ENCODE measurements at regions of chr19 and their contacts with region 1.

Region 1: DNA sequence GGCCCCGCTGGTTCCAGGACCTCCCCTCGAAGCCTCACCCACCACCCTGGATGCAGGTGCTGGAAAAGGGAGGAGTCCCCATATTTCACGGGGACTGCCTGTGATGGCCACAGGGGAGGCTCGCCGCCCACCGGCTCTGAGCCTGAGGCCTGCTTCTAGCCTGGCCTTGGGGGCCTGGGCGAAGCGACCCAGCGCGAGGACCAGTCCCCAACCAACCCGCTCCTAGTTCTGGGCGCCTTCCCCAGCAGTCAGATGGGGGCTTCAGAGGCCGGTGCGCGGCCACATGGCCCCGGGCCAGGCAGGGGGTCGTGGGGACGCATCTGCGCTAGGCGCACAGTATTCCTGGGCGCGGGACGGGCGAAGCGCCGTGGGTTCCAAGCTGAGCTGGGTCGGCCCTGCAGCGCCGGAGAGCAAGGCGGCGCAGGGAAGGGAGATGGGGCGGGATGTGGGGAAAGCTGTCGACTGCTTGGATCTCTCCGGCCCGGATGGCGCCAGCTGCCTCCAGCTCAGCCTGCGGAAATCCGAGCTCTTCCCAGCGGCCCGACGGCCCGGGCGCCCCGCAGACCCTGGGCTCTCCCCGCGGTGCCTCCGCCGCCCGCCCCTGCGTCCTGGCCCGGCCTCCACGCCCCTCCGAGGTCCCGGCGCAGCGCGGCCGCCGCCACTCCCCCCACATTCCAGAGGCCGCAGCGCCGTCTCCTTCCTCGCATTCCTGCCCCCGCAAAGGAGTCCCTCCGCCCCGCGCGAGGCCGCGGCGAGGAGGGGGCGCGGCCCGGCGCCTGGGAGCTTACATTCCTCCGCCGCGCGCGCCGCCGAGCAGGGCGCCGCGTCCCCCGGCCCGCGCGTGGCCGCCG is at the start of gene WTIP:
- DNase-seq: peak in 1 of 2 donors; percentile 88
- H3K4me3 ChIP-seq: peak within 1 kb of the TSS; percentile 88 to 98
- H3K27ac ChIP-seq: peak within 1 kb of the TSS; percentile 86 to 95
- H3K4me1 ChIP-seq: peaks cover 6 to 21% of the 10 kb centered on the region in 2 donors
- H3K27me3 ChIP-seq: no peaks in the 10 kb centered on the region
- CTCF ChIP-seq: no peak
- total RNA-seq, gene WTIP: 127 TPM

Region 2: GRCh38 chr19:34253699-34254551 is 227.3 kb before region 1 on chr19:
- intact Hi-C with region 1: loop called (anchors 10 kb)
- DNase-seq: peak; percentile 34 to 90
- H3K4me3 ChIP-seq: peak overlapping the region; percentile 81 to 83
- H3K27ac ChIP-seq: peak overlapping the region; percentile 95 to 98
- H3K4me1 ChIP-seq: peaks cover 0 to 18% of the 10 kb centered on the region in 2 donors
- H3K27me3 ChIP-seq: no peaks in the 10 kb centered on the region
- CTCF ChIP-seq: no peak

Region 3: GRCh38 chr19:34409189-34410164 is 71.7 kb before region 1 on chr19:
- intact Hi-C with region 1: no loop called
- DNase-seq: no peak
- H3K4me3 ChIP-seq: no peak overlapping the region
- H3K27ac ChIP-seq: no peak overlapping the region
- H3K4me1 ChIP-seq: peaks cover 0 to 7% of the 10 kb centered on the region in 2 donors
- H3K27me3 ChIP-seq: no peaks in the 10 kb centered on the region
- CTCF ChIP-seq: no peak

Region 4: DNA sequence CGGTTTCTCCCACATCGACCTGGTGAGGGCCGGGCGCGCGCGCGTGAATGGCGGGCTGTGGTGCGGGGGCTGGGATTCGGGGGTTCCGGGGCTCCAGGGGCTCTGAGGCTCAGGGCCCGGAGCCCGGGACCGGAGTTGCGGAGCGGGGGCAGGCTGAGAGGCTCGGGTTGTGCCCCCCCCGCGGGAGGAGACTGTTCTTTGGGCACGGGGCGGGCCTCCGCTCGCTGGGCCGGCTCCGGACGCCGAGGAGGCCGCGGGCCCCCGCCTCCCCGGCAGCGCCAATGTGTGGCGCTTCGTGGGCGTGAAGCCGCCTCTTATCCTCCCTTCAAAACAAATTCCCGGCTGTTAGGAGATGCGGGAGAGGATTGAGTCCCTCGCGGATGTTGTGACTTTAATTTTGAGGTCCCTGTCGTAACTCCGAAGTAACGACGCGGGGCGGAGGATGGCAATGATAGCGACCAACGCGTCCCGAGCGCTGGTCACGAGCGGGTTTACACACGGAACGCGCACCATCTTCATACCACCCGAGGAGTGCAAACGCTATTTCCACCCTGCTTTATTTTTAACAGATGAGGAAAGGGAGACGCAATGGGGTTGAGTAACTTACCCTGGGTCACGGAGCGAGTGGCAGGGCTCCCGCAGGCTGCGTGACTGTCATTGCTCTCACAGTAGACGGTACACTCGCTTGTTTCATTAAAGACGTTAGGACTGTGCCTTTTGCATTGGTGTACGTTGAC is 52.5 kb before region 1 on chr19:
- intact Hi-C with region 1: loop called (anchors 1 kb)
- DNase-seq: peak in 1 of 2 donors; percentile 71
- H3K4me3 ChIP-seq: peak overlapping the region; percentile 75 to 88
- H3K27ac ChIP-seq: peak overlapping the region; percentile 93 to 99
- H3K4me1 ChIP-seq: peaks cover 8 to 40% of the 10 kb centered on the region in 2 donors
- H3K27me3 ChIP-seq: no peaks in the 10 kb centered on the region
- CTCF ChIP-seq: no peak

Region 5: DNA sequence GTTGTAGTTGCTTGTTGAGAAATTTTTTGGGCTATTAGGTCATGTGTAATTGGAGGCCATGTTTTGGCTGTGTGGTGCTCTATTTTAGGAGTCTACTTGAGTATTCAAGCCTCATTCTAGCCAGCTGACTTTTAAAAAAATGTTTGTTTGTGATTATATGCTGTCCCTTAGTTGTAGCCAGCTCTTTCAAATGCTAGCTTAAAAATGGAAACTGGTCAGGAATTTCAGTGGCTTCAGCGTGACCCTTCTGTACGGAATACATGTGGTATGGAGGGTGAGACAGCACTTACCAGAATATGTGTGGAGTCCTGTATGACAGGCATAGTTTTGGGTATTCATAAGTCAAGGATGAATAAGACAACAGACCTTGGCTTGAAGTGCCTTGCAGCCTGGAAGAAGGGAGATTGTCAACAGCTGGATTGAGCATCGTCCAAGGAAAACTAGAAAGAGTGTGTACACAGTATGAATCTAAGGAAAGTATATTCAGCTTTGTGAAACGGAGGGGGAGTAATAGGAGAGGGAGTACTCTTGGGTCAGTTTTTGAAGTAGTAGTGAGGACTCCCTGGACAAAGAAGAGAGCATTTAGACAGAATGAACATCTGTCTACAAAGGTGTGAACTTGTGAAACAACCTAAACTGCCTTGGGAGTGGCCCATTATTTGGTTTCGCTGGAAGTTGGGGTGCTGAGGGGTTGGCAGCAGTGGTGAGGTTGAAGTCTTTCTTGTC is 19.7 kb before region 1 on chr19:
- intact Hi-C with region 1: loop called (anchors 1 kb)
- DNase-seq: peak in 1 of 2 donors; percentile 71
- H3K4me3 ChIP-seq: peak overlapping the region in 1 of 2 donors; percentile 21
- H3K27ac ChIP-seq: peak overlapping the region; percentile 82 to 89
- H3K4me1 ChIP-seq: peaks cover 22 to 53% of the 10 kb centered on the region in 2 donors
- H3K27me3 ChIP-seq: no peaks in the 10 kb centered on the region
- CTCF ChIP-seq: no peak

Region 6: GRCh38 chr19:34523408-34523807 is 42.2 kb after region 1 on chr19:
- intact Hi-C with region 1: no loop called
- DNase-seq: no peak
- H3K4me3 ChIP-seq: no peak overlapping the region
- H3K27ac ChIP-seq: no peak overlapping the region
- H3K4me1 ChIP-seq: no peaks in the 10 kb centered on the region
- H3K27me3 ChIP-seq: no peaks in the 10 kb centered on the region
- CTCF ChIP-seq: no peak